Activated CD4-positive, alpha-beta memory T cell treated with anti-CD3 and anti-CD28 coated beads for 36 hours (primary cell): ENCODE measurements at regions of chr3 and their contacts with region 1.

Region 1: GRCh38 chr3:42190701-42191462 is 75.1 kb downstream of the CCK start:
- DNase-seq: peak; percentile 74
- H3K4me3 Mint-ChIP-seq: no peak overlapping the region
- H3K27ac Mint-ChIP-seq: no peak overlapping the region
- H3K4me1 Mint-ChIP-seq: peaks cover 4% of the 10 kb centered on the region
- H3K27me3 Mint-ChIP-seq: no peaks in the 10 kb centered on the region

Region 2: GRCh38 chr3:41574900-41575299 is 616.0 kb before region 1 on chr3:
- CTCF ChIA-PET with region 1: no interaction called
- POLR2A ChIA-PET with region 1: no interaction called
- intact Hi-C with region 1: no loop called
- DNase-seq: no peak
- H3K4me3 Mint-ChIP-seq: no peak overlapping the region
- H3K27ac Mint-ChIP-seq: no peak overlapping the region
- H3K4me1 Mint-ChIP-seq: no peaks in the 10 kb centered on the region
- H3K27me3 Mint-ChIP-seq: no peaks in the 10 kb centered on the region

Region 3: GRCh38 chr3:42118762-42119361 is 72.0 kb before region 1 on chr3:
- CTCF ChIA-PET with region 1: interaction called, 42 read pairs
- POLR2A ChIA-PET with region 1: no interaction called
- intact Hi-C with region 1: loop called (anchors 1 kb)
- DNase-seq: peak; percentile 34
- H3K4me3 Mint-ChIP-seq: no peak overlapping the region
- H3K27ac Mint-ChIP-seq: no peak overlapping the region
- H3K4me1 Mint-ChIP-seq: peaks cover 13% of the 10 kb centered on the region
- H3K27me3 Mint-ChIP-seq: no peaks in the 10 kb centered on the region

Region 4: DNA sequence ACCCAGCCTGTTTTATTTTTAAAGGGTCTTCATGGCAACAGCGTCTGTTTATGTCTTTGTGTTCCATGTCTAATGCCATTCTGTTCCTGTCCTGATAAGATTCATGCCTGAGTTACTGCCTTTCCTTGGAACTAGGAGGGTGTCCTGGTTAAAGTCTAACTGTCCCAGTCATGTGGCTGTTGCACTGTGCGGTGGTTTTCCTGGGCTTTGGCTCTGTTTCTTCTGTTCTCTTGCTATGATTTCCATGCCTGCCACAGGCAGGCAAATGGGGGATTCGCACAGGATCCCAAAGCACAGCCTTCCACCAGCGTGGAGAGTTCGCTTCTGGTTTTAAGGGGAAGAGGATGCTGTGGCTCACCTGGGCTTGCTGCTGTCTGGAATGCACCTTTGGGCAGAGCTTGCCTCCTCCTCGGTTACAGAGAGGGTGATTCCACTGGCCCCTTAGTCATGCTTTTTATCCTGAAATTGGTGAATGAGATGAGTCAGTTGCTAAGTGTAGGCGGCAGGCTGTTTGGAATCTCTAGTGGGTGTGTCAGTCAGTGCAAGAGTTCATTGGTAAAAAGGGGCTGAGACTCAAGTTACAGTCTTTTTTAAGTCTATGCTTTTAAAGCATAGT is 11.7 kb before region 1 on chr3:
- CTCF ChIA-PET with region 1: interaction called, 44 read pairs
- POLR2A ChIA-PET with region 1: no interaction called
- intact Hi-C with region 1: no loop called
- DNase-seq: peak; percentile 41
- H3K4me3 Mint-ChIP-seq: no peak overlapping the region
- H3K27ac Mint-ChIP-seq: no peak overlapping the region
- H3K4me1 Mint-ChIP-seq: peaks cover 9% of the 10 kb centered on the region
- H3K27me3 Mint-ChIP-seq: no peaks in the 10 kb centered on the region

Region 5: DNA sequence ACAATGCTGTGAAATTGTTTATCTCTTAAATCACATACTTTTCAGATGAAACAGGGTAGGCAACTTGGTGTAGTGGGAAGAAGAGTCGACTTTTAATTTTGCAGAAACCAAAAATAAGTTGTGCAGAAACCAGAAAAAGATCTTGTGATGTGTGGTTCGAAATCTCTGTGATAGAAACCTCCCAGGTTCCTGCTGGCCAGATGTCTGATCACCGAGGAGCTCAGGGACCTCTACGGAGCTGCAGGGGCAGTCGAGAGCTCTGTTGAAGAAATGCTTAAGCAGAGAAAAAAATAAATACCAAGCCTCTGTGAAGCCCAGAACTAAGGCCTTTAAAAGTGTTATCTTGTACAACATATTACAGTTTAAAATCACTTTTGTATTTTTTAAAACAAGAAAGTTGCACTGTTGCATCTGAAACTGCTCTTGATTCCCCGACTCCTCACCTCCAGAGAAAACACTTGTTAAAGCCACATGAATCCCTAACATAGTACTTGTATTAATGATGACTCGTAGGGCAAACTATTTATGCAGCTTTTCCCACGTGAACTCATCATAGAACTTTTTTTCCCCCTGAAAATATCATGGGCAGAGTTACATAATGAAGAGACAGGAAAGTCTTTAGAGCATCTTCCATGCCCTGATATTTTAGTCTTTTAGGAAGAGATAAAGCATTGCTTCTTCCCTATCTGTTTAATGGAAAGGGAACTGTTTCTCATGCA is 23.8 kb after region 1 on chr3:
- CTCF ChIA-PET with region 1: interaction called, 15 read pairs
- POLR2A ChIA-PET with region 1: interaction called, 3 read pairs
- intact Hi-C with region 1: no loop called
- DNase-seq: no peak
- H3K4me3 Mint-ChIP-seq: no peak overlapping the region
- H3K27ac Mint-ChIP-seq: no peak overlapping the region
- H3K4me1 Mint-ChIP-seq: peaks cover 48% of the 10 kb centered on the region
- H3K27me3 Mint-ChIP-seq: no peaks in the 10 kb centered on the region

Region 6: DNA sequence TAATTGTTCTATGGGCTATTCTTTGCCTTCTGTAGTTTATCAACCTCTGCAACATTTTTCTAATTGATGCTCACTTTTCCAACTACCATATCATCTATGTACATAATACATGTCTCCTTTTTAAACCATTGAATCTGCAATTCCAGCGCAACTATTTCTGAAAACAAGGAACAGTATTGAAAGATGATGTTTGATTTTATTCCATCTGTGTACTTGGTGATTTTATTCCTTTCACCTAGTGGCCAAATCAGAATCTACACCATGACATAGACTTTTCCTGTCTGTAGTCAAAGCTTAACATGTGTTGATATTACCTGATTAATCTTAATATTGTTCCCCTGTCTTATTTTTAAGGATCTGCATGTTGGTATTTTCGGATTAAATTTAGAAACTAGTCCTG is 422.6 kb after region 1 on chr3:
- CTCF ChIA-PET with region 1: no interaction called
- POLR2A ChIA-PET with region 1: no interaction called
- intact Hi-C with region 1: no loop called
- DNase-seq: no peak
- H3K4me3 Mint-ChIP-seq: no peak overlapping the region
- H3K27ac Mint-ChIP-seq: peak overlapping the region; percentile 2
- H3K4me1 Mint-ChIP-seq: peaks cover 72% of the 10 kb centered on the region
- H3K27me3 Mint-ChIP-seq: no peaks in the 10 kb centered on the region